Mammary epithelial cell (primary cell): ENCODE measurements at regions of chr5 and their contacts with region 1.

Region 1: DNA sequence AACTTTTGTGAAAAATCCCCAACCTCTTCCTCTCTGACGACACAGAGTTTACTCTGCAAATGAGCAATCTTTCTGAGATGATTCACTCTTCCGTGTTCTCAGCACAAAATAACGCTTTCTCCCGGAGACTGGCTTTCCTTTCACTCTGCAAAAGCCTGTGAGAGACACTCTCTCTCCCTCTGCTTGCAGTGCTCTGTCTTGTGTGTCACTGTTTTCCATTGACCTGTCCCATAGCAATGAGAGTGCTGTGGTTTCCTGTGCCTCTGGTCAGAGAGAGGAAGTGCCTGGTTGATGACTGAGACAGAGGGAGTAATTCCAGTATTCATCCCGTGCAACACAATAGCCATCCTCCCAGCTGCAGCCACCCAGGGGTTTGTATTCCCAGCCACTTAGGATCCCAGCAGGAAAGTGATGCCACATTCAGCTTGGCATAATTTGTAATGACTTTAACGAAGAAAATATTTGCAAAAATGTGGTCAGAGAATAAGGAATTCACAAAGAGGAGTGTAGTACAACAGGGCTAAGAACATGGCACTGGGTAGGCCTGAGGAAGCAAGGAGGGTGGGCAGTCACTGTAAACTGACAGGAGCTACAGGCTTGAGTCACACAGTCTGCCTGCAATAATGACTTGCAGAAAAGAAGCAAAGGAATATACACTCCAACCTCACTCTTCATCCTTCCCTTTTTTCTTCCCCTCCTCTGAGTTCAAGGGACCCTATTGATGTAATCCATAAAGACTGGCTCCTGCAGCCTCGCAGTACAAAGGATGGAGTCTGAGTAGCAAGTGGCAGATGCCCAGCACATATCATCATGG is 463.5 kb upstream of the RGMB start:
- DNase-seq: peak; percentile 99
- H3K4me3 ChIP-seq: peak overlapping the region in 2 of 3 experiments; percentile 17 to 24
- H3K27ac ChIP-seq: peak overlapping the region; percentile 96
- H3K4me1 ChIP-seq: peaks cover 52% of the 10 kb centered on the region
- H3K27me3 ChIP-seq: no peaks in the 10 kb centered on the region
- CTCF ChIP-seq: no peak

Region 2: GRCh38 chr5:98109561-98110006 is 200.4 kb before region 1 on chr5:
- CTCF ChIA-PET with region 1: no interaction called
- dilution Hi-C with region 1: no loop called
- in situ Hi-C with region 1: no loop called
- intact Hi-C with region 1: loop called (anchors 1 kb)
- DNase-seq: peak; percentile 72
- H3K4me3 ChIP-seq: no peak overlapping the region
- H3K27ac ChIP-seq: peak overlapping the region; percentile 78
- H3K4me1 ChIP-seq: peaks cover 42% of the 10 kb centered on the region
- H3K27me3 ChIP-seq: no peaks in the 10 kb centered on the region
- CTCF ChIP-seq: no peak

Region 3: GRCh38 chr5:98248949-98249348 is 61.0 kb before region 1 on chr5:
- CTCF ChIA-PET with region 1: no interaction called
- dilution Hi-C with region 1: no loop called
- in situ Hi-C with region 1: no loop called
- intact Hi-C with region 1: loop called (anchors 5 kb)
- DNase-seq: peak; percentile 63
- H3K4me3 ChIP-seq: no peak overlapping the region
- H3K27ac ChIP-seq: no peak overlapping the region
- H3K4me1 ChIP-seq: no peaks in the 10 kb centered on the region
- H3K27me3 ChIP-seq: no peaks in the 10 kb centered on the region
- CTCF ChIP-seq: no peak

Region 4: DNA sequence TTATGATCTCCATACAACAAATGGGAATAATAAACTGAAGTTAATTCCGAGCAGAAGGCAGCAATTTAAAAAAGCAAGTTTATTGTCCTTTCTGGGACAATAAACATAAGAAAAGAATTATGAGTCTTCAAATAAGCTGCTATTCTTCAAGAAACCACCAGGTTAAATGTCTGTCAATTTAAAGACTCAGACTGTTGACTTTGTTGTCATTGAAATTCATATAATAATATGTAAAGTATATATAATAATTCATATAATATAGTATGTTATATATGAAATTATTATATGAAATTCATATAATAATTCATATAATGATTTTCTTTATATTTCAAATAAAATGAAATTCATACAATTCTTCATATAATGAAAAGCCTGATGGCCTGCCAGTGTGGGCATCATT is 34.0 kb before region 1 on chr5:
- CTCF ChIA-PET with region 1: interaction called, 24 read pairs
- dilution Hi-C with region 1: no loop called
- in situ Hi-C with region 1: no loop called
- intact Hi-C with region 1: no loop called
- DNase-seq: no peak
- H3K4me3 ChIP-seq: no peak overlapping the region
- H3K27ac ChIP-seq: no peak overlapping the region
- H3K4me1 ChIP-seq: no peaks in the 10 kb centered on the region
- H3K27me3 ChIP-seq: no peaks in the 10 kb centered on the region
- CTCF ChIP-seq: no peak

Region 5: DNA sequence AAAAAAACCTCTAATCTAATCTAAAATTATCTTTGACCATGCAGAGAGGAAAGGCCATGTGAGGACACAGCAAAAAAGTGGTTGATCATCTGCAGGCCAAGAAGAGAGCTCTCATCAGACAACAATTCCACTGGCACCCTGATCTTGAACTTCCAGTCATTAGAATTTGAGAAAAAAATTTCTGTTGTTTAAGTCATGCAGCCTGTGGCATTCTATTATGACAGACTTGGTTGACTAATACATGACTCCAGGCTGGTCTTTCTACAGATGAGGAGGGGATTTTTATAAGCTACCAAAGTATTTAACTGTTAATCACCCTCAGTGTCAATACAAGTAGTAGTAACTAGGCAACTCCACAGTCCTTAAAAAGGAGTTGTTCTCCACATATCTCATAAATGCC is 104.9 kb after region 1 on chr5:
- CTCF ChIA-PET with region 1: no interaction called
- dilution Hi-C with region 1: no loop called
- in situ Hi-C with region 1: no loop called
- intact Hi-C with region 1: loop called (anchors 1 kb)
- DNase-seq: peak; percentile 90
- H3K4me3 ChIP-seq: no peak overlapping the region
- H3K27ac ChIP-seq: peak overlapping the region; percentile 95
- H3K4me1 ChIP-seq: peaks cover 32% of the 10 kb centered on the region
- H3K27me3 ChIP-seq: no peaks in the 10 kb centered on the region
- CTCF ChIP-seq: no peak

Region 6: GRCh38 chr5:99099691-99100090 is 789.7 kb after region 1 on chr5:
- CTCF ChIA-PET with region 1: no interaction called
- dilution Hi-C with region 1: no loop called
- in situ Hi-C with region 1: no loop called
- intact Hi-C with region 1: no loop called
- DNase-seq: no peak
- H3K4me3 ChIP-seq: no peak overlapping the region
- H3K27ac ChIP-seq: no peak overlapping the region
- H3K4me1 ChIP-seq: no peaks in the 10 kb centered on the region
- H3K27me3 ChIP-seq: no peaks in the 10 kb centered on the region
- CTCF ChIP-seq: no peak